ENCODE measurements at regions of chr4 and their contacts with region 1.

Region 1: GRCh38 chr4:148441986-148442831 is at the start of gene NR3C2:
- DNase-seq: peak; percentile 94
- H3K4me3 ChIP-seq: peak within 1 kb of the TSS; percentile 52 to 87 (median 69)
- H3K27ac ChIP-seq: no peak within 1 kb of the TSS
- H3K4me1 ChIP-seq: peaks cover 26% of the 10 kb centered on the region
- H3K27me3 ChIP-seq: peaks cover 37% of the 10 kb centered on the region
- CTCF ChIP-seq: no peak
- total RNA-seq, gene NR3C2: 0.40 to 1.2 TPM

Region 2: GRCh38 chr4:148420397-148420796 is 21.8 kb before region 1 on chr4:
- CTCF ChIA-PET with region 1: no interaction called
- dilution Hi-C with region 1: no loop called
- in situ Hi-C with region 1: no loop called
- intact Hi-C with region 1: loop called (anchors 2 kb)
- DNase-seq: no peak
- H3K4me3 ChIP-seq: no peak overlapping the region
- H3K27ac ChIP-seq: no peak overlapping the region
- H3K4me1 ChIP-seq: no peaks in the 10 kb centered on the region
- H3K27me3 ChIP-seq: no peaks in the 10 kb centered on the region
- CTCF ChIP-seq: no peak

Region 3: DNA sequence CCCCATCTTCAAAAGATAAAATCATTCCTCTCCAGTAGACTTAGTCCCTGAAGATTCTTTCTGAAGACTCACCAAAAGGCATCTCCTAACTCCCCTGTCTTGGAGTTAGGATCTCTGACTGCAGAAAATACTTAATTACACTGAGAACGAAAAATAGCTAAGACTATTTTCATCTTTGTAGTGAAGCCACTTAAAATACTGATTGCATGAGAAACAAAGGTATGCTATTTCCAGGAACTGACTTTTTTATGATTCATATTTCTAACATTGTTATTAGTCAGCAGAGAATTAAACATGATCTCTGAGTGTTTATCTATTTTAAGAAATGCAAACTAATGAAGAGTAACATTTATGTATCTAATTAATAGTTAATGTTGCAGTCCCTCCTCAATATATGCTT is 71.8 kb after region 1 on chr4:
- CTCF ChIA-PET with region 1: no interaction called
- dilution Hi-C with region 1: no loop called
- in situ Hi-C with region 1: no loop called
- intact Hi-C with region 1: loop called (anchors 5 kb)
- DNase-seq: peak; percentile 17
- H3K4me3 ChIP-seq: no peak overlapping the region
- H3K27ac ChIP-seq: no peak overlapping the region
- H3K4me1 ChIP-seq: peaks cover 8% of the 10 kb centered on the region
- H3K27me3 ChIP-seq: no peaks in the 10 kb centered on the region
- CTCF ChIP-seq: no peak

Region 4: DNA sequence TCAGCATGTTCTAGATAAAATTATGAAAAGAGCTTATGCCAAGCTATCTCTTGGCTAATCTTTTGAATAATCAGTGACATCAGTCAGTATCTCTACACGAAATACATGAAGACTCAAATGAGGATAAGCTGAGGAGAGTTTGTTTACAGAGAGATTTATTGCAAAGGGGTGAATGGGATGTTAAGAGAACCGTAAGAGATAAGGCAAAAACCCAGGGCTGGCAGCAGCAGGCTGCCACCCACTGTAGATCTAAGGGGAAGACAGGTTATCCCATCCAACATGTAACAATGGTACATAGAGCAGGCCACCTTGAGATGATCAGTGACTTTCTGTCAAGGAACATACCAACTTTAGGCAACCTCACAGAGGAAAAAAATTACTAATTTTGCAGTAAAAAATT is 432.1 kb after region 1 on chr4:
- CTCF ChIA-PET with region 1: no interaction called
- dilution Hi-C with region 1: no loop called
- in situ Hi-C with region 1: no loop called
- intact Hi-C with region 1: loop called (anchors 5 kb)
- DNase-seq: no peak
- H3K4me3 ChIP-seq: no peak overlapping the region
- H3K27ac ChIP-seq: no peak overlapping the region
- H3K4me1 ChIP-seq: no peaks in the 10 kb centered on the region
- H3K27me3 ChIP-seq: no peaks in the 10 kb centered on the region
- CTCF ChIP-seq: peak in 1 of 2 donors; percentile 41

Region 5: GRCh38 chr4:149031399-149031798 is 589.2 kb after region 1 on chr4:
- CTCF ChIA-PET with region 1: no interaction called
- dilution Hi-C with region 1: no loop called
- in situ Hi-C with region 1: no loop called
- intact Hi-C with region 1: loop called (anchors 5 kb)
- DNase-seq: peak; percentile 11
- H3K4me3 ChIP-seq: no peak overlapping the region
- H3K27ac ChIP-seq: no peak overlapping the region
- H3K4me1 ChIP-seq: no peaks in the 10 kb centered on the region
- H3K27me3 ChIP-seq: no peaks in the 10 kb centered on the region
- CTCF ChIP-seq: peak; percentile 56 to 74

Measured in mammary epithelial cell (primary cell).